GM10248 (cell line): ENCODE measurements at regions of chr11 and their contacts with region 1.

Region 1: DNA sequence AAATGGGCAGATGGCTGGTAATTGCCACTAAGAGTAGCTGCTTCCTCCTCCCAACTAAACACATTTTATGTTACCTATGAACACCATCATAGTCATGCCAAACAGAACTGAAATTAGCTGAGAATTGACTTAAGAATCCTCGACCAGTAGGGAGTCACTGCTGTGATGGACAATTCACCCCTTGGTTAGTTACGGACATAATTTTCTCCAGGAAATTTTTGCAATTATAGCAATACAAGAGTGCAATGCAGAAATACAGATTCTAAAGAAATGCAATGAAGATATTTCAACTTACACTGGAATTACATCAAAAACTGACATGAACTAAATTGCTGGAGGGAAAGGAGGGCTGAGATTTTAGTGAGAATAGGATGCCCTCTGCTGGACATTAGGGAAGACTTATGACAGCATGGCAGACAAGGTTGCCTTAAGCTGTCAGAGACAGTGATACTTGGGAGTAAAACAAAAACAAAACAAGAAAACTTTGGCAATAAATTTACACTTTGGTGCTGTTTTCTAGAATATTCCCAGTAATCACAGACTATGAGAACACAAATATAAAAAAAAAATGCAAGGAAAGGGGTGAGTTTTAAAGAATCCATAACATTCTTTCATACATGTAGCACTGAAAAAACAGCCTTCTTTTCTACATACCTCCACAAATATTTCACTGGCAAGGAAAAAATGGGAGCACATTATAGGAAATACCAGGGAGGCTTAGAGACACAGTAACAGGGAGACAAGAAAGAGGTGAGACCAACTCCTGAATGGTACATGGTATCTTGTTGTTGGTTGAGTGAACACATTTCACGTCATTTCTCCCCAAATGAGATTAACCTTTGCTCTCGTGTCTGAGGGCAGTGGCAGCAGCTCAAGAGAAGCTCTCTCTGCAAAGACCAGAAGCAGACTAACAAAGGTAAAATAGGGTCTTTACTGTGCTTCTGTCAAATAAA is 11.2 kb upstream of the PPP2R1B start:
- DNase-seq: peak; percentile 62
- CTCF ChIP-seq: peak; percentile 63

Region 2: GRCh38 chr11:111565114-111565720 is 212.2 kb before region 1 on chr11:
- CTCF ChIA-PET with region 1: interaction called, 13 read pairs
- POLR2A ChIA-PET with region 1: no interaction called
- DNase-seq: peak; percentile 62
- CTCF ChIP-seq: peak; percentile 68

Region 3: DNA sequence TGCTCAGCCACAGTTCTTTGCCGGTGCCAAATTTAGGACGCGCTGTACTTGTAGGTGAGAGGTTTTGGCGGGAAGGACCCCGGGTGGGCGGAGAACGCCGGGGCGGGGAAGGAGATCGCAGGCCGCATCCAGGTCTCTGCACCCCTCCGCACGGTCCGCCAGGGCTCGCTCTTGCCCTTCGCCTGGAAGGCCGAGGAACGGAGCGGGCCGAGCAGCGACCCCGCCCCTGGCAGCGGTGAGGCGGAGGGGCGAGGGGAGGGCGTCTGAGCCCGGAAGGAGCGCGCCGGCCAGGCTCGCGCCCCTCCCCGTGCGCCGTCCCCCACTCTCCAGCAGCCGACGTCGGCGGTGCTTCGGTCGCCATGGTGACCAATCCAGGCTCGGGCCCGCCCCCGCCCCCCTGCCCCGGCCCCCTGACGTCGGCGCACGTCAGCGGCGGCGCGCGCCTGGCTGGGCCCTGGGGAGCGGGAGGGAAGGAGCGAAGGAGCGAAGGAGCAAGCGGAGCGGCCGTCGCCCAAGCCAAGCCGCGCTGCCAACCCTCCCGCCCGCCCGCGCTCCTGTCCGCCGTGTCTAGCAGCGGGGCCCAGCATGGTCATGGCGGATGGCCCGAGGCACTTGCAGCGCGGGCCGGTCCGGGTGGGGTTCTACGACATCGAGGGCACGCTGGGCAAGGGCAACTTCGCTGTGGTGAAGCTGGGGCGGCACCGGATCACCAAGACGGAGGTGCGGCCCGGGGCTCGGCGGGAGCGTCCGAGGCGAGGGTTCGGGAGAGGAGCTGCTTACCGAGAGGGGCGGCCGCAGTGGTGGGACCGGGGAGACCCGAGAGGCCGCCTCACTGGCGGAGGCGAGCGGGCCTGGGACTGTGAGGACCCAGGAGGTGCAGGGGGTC is 175.1 kb before region 1 on chr11 and contains the start of gene SIK2:
- CTCF ChIA-PET with region 1: interaction called, 54 read pairs
- POLR2A ChIA-PET with region 1: no interaction called
- DNase-seq: peak; percentile 97
- CTCF ChIP-seq: peak; percentile 95

Region 4: GRCh38 chr11:111759376-111759775 is 18.0 kb before region 1 on chr11:
- CTCF ChIA-PET with region 1: interaction called, 72 read pairs
- POLR2A ChIA-PET with region 1: no interaction called
- DNase-seq: no peak
- CTCF ChIP-seq: no peak

Region 5: DNA sequence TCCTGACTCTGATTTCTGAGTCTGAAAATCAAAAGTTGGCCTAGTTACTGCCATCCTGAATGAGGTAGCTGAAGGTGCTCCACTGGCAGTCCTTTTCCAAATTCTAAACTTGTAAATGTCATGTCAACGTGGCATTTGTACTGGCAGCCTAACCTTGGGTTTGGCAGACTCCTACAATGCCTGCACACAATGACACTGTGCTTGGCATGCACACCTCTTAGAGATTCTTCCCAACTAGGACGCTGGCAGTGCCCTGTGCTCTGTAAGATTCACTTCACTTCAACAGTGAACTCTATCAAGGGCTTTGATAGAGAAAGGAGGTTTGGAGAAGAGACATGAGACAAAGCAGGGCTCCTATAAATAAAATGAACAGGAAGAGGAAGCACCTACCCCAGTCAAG is 10.7 kb after region 1 on chr11:
- CTCF ChIA-PET with region 1: interaction called, 51 read pairs
- POLR2A ChIA-PET with region 1: no interaction called
- DNase-seq: no peak
- CTCF ChIP-seq: no peak

Region 6: GRCh38 chr11:111846636-111847035 is 69.3 kb after region 1 on chr11:
- CTCF ChIA-PET with region 1: interaction called, 11 read pairs
- POLR2A ChIA-PET with region 1: no interaction called
- DNase-seq: no peak
- CTCF ChIP-seq: no peak